ENCODE measurements at regions of chr22 and their contacts with region 1.

Region 1: GRCh38 chr22:24423519-24424000 is 3.8 kb upstream of the ADORA2A start:
- DNase-seq: peak; percentile 21 to 57
- ATAC-seq: peak; percentile 57 to 72
- H3K4me3 ChIP-seq: peak overlapping the region; percentile 62
- H3K27ac ChIP-seq: peak overlapping the region; percentile 56 to 92; a peak in 4 of 6 replicates
- H3K4me1 ChIP-seq: no peaks in the 10 kb centered on the region
- CTCF ChIP-seq: peak; percentile 73
- EP300 ChIP-seq: no peak
- POLR2A ChIP-seq: no peak
- RAD21 ChIP-seq: peak; percentile 37 to 77; a peak in 4 of 5 replicates

Region 2: DNA sequence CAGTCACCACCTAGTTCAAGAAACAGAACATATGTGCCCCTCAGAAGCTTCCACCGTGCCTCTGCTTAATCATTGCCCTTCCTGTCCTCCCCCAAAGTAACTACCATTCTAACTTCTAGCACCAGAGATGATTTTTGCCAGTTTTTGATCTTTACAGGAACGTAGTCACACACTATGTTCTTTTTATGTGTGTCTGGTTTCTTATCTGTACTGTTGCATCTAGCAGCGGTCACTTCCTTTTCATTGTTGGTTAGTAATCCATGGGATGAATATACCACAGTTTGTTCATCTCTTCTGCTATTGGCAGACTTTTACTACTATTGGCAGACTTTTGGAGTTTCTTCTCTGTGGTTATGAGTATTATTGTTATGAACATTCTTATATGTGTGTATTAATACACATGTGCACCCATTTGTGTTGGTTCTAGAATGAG is 118.3 kb before region 1 on chr22:
- CTCF ChIA-PET with region 1: no interaction called
- POLR2A ChIA-PET with region 1: no interaction called
- DNase-seq: no peak
- ATAC-seq: no peak
- H3K4me3 ChIP-seq: no peak overlapping the region
- H3K27ac ChIP-seq: no peak overlapping the region
- H3K4me1 ChIP-seq: peaks cover 22% of the 10 kb centered on the region; the same call in 2 of the 3 replicates
- CTCF ChIP-seq: no peak
- EP300 ChIP-seq: no peak
- POLR2A ChIP-seq: no peak
- RAD21 ChIP-seq: no peak

Region 3: DNA sequence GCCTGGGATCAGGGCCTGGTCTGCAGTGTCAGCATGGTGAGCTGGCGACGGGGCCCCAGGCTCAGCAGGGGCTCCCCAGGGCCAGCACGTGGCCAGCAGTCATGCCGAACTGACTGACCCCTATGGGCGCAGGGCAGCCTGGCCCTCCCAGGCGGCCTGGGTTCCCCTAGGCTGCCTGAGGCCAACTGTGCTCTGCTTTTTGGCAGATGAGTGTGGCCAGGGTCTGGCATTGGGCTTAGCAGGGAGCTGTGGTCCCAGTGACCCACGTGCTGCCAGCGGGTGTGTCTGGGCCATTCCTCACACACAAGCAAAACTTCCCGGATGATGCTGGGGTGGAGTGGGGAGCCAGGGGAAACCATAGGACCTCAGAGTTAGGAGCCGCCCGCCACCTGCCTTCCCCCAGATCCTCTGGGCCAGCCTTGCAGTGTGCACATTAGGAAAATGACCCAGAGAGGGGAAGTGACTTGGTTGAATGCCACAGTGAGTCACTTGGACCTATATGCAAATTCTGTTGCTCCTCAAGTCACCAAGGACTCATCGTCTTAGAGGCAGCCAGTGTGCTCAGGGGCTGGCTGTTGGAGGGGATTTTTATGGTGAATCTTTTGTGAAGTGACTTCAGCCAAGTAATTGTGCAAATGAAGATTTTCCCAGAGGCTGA is 10.4 kb after region 1 on chr22:
- CTCF ChIA-PET with region 1: interaction called, 15 read pairs
- POLR2A ChIA-PET with region 1: no interaction called
- DNase-seq: no peak
- ATAC-seq: no peak
- H3K4me3 ChIP-seq: no peak overlapping the region
- H3K27ac ChIP-seq: no peak overlapping the region
- H3K4me1 ChIP-seq: no peaks in the 10 kb centered on the region
- CTCF ChIP-seq: no peak
- EP300 ChIP-seq: no peak
- POLR2A ChIP-seq: no peak
- RAD21 ChIP-seq: no peak

Region 4: GRCh38 chr22:24450610-24451009 is 27.1 kb after region 1 on chr22:
- CTCF ChIA-PET with region 1: no interaction called
- POLR2A ChIA-PET with region 1: no interaction called
- DNase-seq: no peak
- ATAC-seq: no peak
- H3K4me3 ChIP-seq: no peak overlapping the region
- H3K27ac ChIP-seq: no peak overlapping the region
- H3K4me1 ChIP-seq: no peaks in the 10 kb centered on the region
- CTCF ChIP-seq: no peak
- EP300 ChIP-seq: no peak
- POLR2A ChIP-seq: no peak
- RAD21 ChIP-seq: no peak

Region 5: DNA sequence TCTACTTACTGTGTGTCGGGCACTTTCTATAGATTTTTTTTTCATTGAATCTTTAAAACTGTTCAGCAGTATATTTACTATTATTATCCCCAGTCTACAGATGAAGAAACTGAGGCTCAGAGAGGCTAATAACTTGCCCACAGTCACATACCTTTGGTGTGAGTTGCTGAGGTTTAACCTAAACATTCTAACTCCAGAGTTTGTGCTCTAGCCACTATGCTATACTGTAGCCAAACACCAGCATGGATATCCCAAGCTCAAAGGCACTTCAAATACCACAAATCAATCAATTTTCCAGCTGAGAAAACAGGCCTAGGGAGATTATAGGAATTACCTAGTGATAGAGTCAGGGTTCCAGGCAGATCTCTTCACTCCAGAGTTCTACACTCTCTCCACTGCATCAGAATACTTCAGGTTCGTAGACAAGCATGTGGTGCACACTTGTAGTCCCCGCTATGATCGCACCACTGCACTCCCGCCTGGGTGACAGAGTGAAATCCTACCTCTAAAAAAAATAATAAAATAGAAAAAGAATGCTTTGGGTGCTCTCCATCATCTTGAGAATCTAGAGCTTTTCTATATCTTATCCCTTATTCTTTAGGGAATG is 51.2 kb after region 1 on chr22:
- CTCF ChIA-PET with region 1: no interaction called
- POLR2A ChIA-PET with region 1: no interaction called
- DNase-seq: no peak
- ATAC-seq: no peak
- H3K4me3 ChIP-seq: no peak overlapping the region
- H3K27ac ChIP-seq: peak overlapping the region in 1 of 2 experiments; percentile 72; a peak in 3 of 6 replicates
- H3K4me1 ChIP-seq: peaks cover 14% of the 10 kb centered on the region
- CTCF ChIP-seq: no peak
- EP300 ChIP-seq: no peak
- POLR2A ChIP-seq: no peak
- RAD21 ChIP-seq: no peak

Region 6: DNA sequence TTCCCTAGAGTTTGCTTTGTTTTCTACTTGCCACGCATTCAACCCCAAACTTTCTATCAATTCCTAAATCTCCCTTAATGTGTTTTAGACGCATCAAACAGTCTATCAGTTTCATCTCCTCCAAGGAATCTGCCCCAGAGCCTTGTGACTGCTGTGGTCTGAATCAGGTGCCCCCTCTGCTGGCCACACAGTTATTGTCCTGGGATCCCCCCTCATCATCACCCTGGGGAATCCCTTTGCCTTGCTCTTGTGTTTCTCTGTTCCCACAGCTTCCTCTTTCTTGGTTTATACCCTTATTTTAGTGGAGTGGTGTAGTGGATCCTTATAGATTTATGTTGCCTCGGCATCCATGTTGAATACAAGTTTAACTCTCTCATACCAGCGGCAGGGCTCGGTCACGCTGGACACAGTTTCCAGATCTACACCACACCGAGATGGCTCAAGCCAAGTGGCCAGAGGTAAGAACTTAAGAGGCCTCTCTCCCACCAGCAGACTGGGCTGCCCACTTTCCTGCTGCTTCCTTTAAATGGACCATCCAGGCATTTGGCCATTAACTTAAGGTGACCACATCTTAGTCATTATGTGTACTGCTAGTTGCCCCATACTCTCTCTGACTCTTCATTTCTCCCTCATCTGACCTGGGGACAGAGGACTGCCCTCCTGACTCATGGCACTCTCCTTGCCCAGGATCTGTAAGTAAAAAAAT is 79.7 kb after region 1 on chr22:
- CTCF ChIA-PET with region 1: interaction called, 32 read pairs
- POLR2A ChIA-PET with region 1: no interaction called
- DNase-seq: peak; percentile 36 to 71
- ATAC-seq: peak; percentile 89 to 91
- H3K4me3 ChIP-seq: no peak overlapping the region
- H3K27ac ChIP-seq: no peak overlapping the region
- H3K4me1 ChIP-seq: peaks cover 25% of the 10 kb centered on the region
- CTCF ChIP-seq: peak; percentile 62
- EP300 ChIP-seq: no peak
- POLR2A ChIP-seq: no peak
- RAD21 ChIP-seq: peak; percentile 67 to 75

Measured in A549 (cell line).